ENCODE measurements at regions of chr1 and their contacts with region 1.

Region 1: DNA sequence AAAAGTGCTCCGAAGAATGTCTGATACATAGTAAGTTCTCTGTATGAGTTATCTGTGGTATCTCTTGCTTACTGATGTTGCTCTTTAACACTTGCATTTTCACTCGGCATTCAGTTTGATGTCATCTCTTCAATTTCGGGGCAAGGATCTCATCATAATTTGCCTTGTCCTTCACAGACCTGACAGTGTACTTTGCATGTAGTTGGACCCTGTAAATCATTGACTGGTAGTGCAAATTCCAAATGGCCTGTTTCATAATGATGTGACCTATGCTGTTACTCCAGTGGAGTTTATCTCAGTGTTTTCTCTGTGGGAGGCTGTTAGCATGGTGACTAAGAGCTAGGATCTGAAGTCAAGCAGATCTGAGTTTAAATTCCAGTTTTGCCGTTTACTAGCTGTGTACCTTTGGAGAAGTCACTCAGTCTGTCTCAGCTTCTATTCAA is 34.2 kb upstream of the ABCD3 start:
- DNase-seq: peak in 2 of 9 donors; percentile 2 to 21
- ATAC-seq: no peak
- H3K4me3 ChIP-seq: no peak overlapping the region
- H3K4me3 Mint-ChIP-seq: peak overlapping the region in 8 of 10 donors; percentile 3 to 84 (median 60)
- H3K27ac ChIP-seq: no peak overlapping the region
- H3K27ac Mint-ChIP-seq: peak overlapping the region; percentile 32 to 91 (median 82)
- H3K4me1 ChIP-seq: peaks cover 0 to 23% of the 10 kb centered on the region in 2 donors
- H3K4me1 Mint-ChIP-seq: peaks cover 15 to 40% (median 34%) of the 10 kb centered on the region in 7 donors
- H3K27me3 ChIP-seq: no peaks in the 10 kb centered on the region
- H3K27me3 Mint-ChIP-seq: peaks cover 0 to 3% (median 0%) of the 10 kb centered on the region in 5 donors

Region 2: DNA sequence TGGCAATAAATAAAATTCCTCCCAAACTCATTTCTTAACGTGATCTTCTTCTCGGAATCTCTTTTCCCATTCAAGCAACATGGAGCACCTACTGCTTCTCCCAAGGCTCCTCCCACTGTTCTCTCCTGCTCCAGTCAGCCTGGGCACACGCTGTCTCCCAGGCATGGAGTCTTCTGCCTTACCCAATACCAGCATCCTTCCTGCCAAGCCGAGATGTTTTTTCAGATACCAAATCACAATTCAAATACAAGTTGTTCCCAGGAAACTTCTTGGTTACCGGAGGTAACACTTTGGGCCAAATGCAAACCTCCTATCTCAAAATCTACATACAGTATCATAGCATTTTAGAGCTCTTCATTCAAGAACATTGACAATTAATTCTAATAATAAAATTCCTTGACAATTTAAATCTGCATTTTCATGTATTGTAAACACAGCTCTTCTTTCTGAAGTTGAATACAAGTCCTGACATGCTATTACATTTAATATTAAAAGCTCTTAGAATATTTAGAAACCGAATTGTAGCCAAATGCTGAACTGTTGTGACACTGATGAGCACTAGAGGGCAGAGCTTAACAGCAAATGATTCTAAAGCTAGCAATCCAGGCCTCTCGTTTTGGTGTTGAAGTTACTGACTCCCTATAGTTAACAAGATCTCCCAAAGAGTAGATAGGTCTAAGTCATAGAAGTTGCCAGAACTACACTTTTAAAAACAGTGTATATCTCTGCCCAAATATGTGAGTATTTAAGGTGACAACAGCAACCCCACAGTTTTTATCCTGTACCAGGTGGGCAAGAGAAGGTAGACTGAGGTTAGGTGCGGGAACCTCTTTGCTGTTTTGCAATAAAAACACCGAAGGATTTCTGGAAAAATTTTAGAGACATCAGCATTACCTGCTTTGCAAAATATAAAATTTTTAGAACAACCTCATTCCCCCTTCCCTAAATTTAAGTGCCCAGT is 754.6 kb before region 1 on chr1:
- CTCF ChIA-PET with region 1: no interaction called
- POLR2A ChIA-PET with region 1: no interaction called
- intact Hi-C with region 1: no loop called
- DNase-seq: peak in 8 of 9 donors; percentile 22 to 69 (median 56)
- ATAC-seq: peak; percentile 89
- H3K4me3 ChIP-seq: no peak overlapping the region
- H3K4me3 Mint-ChIP-seq: no peak overlapping the region
- H3K27ac ChIP-seq: no peak overlapping the region
- H3K27ac Mint-ChIP-seq: no peak overlapping the region
- H3K4me1 ChIP-seq: no peaks in the 10 kb centered on the region
- H3K4me1 Mint-ChIP-seq: no peaks in the 10 kb centered on the region
- H3K27me3 ChIP-seq: no peaks in the 10 kb centered on the region
- H3K27me3 Mint-ChIP-seq: peaks cover 0 to 10% (median 0%) of the 10 kb centered on the region in 5 donors

Region 3: GRCh38 chr1:94218332-94218731 is 165.7 kb before region 1 on chr1:
- CTCF ChIA-PET with region 1: no interaction called
- POLR2A ChIA-PET with region 1: no interaction called
- intact Hi-C with region 1: no loop called
- DNase-seq: no peak
- ATAC-seq: no peak
- H3K4me3 ChIP-seq: no peak overlapping the region
- H3K4me3 Mint-ChIP-seq: no peak overlapping the region
- H3K27ac ChIP-seq: no peak overlapping the region
- H3K27ac Mint-ChIP-seq: no peak overlapping the region
- H3K4me1 ChIP-seq: no peaks in the 10 kb centered on the region
- H3K4me1 Mint-ChIP-seq: no peaks in the 10 kb centered on the region
- H3K27me3 ChIP-seq: no peaks in the 10 kb centered on the region
- H3K27me3 Mint-ChIP-seq: peaks cover 14 to 34% (median 29%) of the 10 kb centered on the region in 5 donors

Region 4: GRCh38 chr1:94335950-94336349 is 48.0 kb before region 1 on chr1:
- CTCF ChIA-PET with region 1: no interaction called
- POLR2A ChIA-PET with region 1: no interaction called
- intact Hi-C with region 1: no loop called
- DNase-seq: peak in 4 of 9 donors; percentile 3 to 34 (median 14)
- ATAC-seq: peak; percentile 49
- H3K4me3 ChIP-seq: no peak overlapping the region
- H3K4me3 Mint-ChIP-seq: no peak overlapping the region
- H3K27ac ChIP-seq: no peak overlapping the region
- H3K27ac Mint-ChIP-seq: no peak overlapping the region
- H3K4me1 ChIP-seq: no peaks in the 10 kb centered on the region
- H3K4me1 Mint-ChIP-seq: peaks cover 0 to 3% (median 0%) of the 10 kb centered on the region in 7 donors
- H3K27me3 ChIP-seq: no peaks in the 10 kb centered on the region
- H3K27me3 Mint-ChIP-seq: peaks cover 4 to 21% (median 10%) of the 10 kb centered on the region in 5 donors

Region 5: DNA sequence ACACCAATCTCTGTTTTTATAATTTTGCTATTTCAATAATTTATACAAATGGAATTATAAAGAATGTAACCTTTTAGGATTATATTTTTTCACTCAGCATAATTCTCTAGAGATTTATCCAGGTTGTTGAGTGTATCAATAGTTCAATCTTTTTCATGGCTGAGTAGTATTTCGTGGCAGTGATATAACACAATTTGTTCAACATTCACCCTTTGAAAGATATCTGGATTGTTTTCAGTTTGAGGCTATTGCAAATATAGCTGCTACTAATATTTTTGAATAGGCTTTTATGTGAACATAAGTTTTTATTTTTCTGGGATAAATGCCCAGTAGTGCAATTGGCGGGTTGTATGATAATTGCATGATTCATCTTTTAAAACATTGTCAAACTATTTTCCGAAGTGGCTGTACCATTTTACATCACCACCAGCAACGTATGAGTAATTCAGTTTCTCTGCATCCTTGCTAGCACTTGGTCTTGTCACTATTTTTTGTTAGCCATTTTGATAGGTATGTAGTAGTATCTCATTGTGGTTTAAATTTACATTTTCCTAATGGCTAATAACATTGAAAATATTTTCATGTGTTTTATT is 21.4 kb before region 1 on chr1:
- CTCF ChIA-PET with region 1: no interaction called
- POLR2A ChIA-PET with region 1: no interaction called
- intact Hi-C with region 1: loop called in 1 of 2 experiments (anchors 1 kb)
- DNase-seq: no peak
- ATAC-seq: no peak
- H3K4me3 ChIP-seq: no peak overlapping the region
- H3K4me3 Mint-ChIP-seq: no peak overlapping the region
- H3K27ac ChIP-seq: no peak overlapping the region
- H3K27ac Mint-ChIP-seq: no peak overlapping the region
- H3K4me1 ChIP-seq: no peaks in the 10 kb centered on the region
- H3K4me1 Mint-ChIP-seq: no peaks in the 10 kb centered on the region
- H3K27me3 ChIP-seq: no peaks in the 10 kb centered on the region
- H3K27me3 Mint-ChIP-seq: peaks cover 0 to 7% (median 5%) of the 10 kb centered on the region in 5 donors